Head of caudate nucleus (tissue), 42 donors: ENCODE measurements at regions of chr2 and their contacts with region 1.

Region 1: GRCh38 chr2:203327901-203328759 is at the start of gene ABI2:
- DNase-seq: peak; percentile 58 to 95 (median 89)

Region 2: GRCh38 chr2:202911512-202912341 is 416.4 kb before region 1 on chr2 and contains the starts of genes CARF and WDR12:
- intact Hi-C with region 1: loop called (anchors 10 kb)
- DNase-seq: peak; percentile 87 to 98 (median 94)

Region 3: GRCh38 chr2:203453858-203454451 is 125.8 kb after region 1 on chr2:
- intact Hi-C with region 1: loop called (anchors 5 kb)
- DNase-seq: peak in 17 of 42 donors; percentile 18 to 76 (median 48)